ENCODE measurements at regions of chr7 and their contacts with region 1.

Region 1: GRCh38 chr7:46011054-46011453 is 90.0 kb upstream of the IGFBP3 start:
- DNase-seq: no peak
- H3K4me3 ChIP-seq: no peak overlapping the region
- H3K27ac ChIP-seq: no peak overlapping the region
- H3K4me1 ChIP-seq: peaks cover 16% of the 10 kb centered on the region
- H3K27me3 ChIP-seq: no peaks in the 10 kb centered on the region
- CTCF ChIP-seq: no peak

Region 2: DNA sequence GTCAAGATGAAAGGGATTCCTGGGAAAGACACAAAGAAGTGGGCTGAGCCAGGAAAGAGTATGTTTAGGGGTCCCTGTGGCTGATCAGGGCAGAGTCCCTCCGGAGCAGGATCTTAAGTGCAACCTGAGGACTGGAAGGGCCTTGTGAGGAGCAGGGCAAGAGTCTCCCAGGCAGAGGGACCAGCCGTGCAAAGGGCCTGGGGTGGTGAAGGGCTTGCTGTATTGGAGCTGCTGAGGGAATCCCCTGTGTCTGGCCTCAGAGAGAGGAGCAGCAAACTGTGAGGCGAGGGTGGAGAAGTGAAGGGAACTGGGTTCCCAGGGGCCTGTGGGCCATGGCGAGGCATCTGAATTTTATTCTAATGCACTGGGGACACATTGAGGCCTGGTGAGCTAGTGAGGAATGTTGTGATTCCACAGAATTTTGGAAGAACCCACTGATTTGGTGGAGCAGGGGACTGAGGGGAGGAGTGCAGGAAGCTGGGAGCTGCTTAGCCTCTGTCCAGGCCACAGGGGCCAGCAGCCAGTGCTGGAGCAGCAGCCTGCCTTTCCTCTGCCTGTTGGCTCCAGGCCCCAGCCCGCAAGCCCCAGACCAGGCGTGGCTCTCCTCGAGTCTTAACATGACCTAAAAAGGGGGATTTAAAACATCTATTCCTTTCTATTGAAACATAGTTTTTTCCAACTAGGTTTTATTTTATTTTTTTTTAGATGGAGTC is 48.4 kb after region 1 on chr7:
- CTCF ChIA-PET with region 1: no interaction called
- dilution Hi-C with region 1: no loop called
- in situ Hi-C with region 1: no loop called
- intact Hi-C with region 1: loop called (anchors 5 kb)
- DNase-seq: no peak
- H3K4me3 ChIP-seq: no peak overlapping the region
- H3K27ac ChIP-seq: no peak overlapping the region
- H3K4me1 ChIP-seq: no peaks in the 10 kb centered on the region
- H3K27me3 ChIP-seq: no peaks in the 10 kb centered on the region
- CTCF ChIP-seq: no peak

Region 3: GRCh38 chr7:46725838-46726237 is 714.8 kb after region 1 on chr7:
- CTCF ChIA-PET with region 1: no interaction called
- dilution Hi-C with region 1: no loop called
- in situ Hi-C with region 1: no loop called
- intact Hi-C with region 1: no loop called
- DNase-seq: no peak
- H3K4me3 ChIP-seq: no peak overlapping the region
- H3K27ac ChIP-seq: no peak overlapping the region
- H3K4me1 ChIP-seq: no peaks in the 10 kb centered on the region
- H3K27me3 ChIP-seq: no peaks in the 10 kb centered on the region
- CTCF ChIP-seq: no peak